GM10248 (cell line): ENCODE measurements at regions of chr4 and their contacts with region 1.

Region 1: GRCh38 chr4:25160714-25161595 is 706 bp upstream of the SEPSECS start:
- DNase-seq: no peak
- CTCF ChIP-seq: no peak

Region 2: GRCh38 chr4:24312261-24312913 is 848.6 kb before region 1 on chr4:
- CTCF ChIA-PET with region 1: no interaction called
- POLR2A ChIA-PET with region 1: interaction called, 10 read pairs
- DNase-seq: no peak
- CTCF ChIP-seq: no peak

Region 3: DNA sequence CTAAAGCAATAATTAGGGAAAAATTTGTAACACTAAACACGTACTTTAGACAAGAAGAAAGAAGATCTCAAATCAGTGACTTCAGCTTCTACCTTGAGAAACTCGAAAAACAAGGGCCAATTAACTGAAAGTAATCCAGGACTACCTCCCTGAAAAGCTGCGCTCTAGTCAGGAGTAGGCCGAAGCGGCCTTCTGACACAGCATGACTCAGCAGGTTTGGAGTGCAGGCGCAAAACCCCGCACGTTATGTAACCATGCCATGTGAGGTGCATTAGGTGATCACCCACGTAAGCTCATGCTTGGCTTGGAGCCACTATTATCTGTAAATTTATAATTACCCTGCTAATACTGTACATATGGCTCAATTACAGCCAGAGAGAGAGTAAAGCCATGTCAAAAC is 195.3 kb before region 1 on chr4:
- CTCF ChIA-PET with region 1: no interaction called
- POLR2A ChIA-PET with region 1: no interaction called
- DNase-seq: no peak
- CTCF ChIP-seq: no peak

Region 4: DNA sequence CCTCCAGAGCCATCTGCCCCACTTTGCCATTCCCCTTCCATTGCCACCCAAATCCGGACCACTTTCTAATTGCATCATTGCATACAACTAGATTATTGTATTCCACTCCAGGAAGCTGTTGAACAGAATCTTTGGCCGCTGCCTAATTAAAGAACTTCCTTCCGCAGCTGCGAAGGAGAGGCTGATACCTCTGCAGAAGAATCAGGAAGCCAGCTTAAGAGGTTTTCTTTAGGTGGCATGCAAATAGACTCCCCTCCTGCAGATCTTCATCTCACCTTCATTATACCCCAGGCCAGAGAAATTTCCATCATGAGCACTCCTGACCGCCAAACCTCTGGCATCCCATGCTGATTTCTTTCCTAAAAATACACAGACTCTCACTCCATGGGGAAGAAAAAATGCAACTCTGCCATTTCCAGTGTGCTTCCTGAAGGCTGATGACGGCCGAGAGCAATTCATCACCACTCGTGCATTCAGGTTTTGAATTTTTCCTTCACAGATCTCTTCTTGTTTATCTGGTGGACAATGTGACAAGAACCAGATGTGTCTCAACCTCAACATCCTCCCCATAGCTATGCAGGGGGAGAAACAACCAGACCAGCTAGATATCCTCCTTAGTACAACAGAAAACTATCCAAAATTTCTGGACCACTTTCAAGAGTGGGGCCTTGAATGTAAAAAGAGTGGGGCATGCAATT is 161.4 kb before region 1 on chr4:
- CTCF ChIA-PET with region 1: no interaction called
- POLR2A ChIA-PET with region 1: no interaction called
- DNase-seq: no peak
- CTCF ChIP-seq: no peak

Region 5: DNA sequence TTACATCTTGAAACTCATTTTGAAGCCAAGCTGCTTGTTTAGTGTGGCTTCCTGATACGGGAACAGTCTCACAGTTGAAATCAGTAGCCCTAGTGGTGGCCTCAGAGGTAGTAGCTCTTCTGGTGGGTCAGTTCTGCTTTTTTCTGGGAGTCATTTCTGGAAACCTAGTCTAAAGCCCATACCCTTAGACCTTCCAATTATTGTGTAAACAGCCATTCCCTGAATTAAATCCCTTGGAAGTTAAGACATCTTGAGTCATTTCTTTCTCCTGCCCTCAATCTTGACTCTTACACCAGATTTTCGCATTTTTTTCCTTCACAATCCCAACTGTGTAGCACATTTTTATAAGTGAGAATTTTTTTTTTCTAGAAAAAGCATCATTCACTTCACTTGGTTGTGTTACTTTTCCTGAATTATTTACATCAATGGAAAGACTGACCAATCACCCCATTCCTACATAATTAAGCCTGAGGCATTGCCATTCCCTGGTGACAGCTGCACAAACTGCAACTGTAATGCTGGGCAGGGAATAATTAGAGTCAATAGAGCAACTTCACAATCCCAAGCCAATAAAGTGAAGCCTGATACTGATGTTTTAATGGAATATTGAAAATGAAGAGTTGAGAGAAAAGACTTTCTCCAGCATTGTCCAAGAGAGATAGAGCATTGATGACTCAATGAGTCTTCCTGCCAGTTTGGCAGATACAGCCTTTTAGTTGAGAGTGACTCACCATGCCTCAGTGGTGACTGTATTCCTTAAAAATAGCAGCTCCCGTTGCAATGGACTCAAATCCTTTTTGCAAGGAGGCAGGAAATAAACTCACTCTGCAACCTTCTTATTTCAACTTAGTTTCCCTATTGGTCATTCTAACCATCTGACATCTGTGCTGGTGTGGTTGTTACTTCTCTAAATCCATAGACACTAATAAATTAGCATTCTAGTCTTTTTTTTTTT is 12.3 kb after region 1 on chr4:
- CTCF ChIA-PET with region 1: interaction called, 13 read pairs
- POLR2A ChIA-PET with region 1: no interaction called
- DNase-seq: peak; percentile 24
- CTCF ChIP-seq: no peak

Region 6: DNA sequence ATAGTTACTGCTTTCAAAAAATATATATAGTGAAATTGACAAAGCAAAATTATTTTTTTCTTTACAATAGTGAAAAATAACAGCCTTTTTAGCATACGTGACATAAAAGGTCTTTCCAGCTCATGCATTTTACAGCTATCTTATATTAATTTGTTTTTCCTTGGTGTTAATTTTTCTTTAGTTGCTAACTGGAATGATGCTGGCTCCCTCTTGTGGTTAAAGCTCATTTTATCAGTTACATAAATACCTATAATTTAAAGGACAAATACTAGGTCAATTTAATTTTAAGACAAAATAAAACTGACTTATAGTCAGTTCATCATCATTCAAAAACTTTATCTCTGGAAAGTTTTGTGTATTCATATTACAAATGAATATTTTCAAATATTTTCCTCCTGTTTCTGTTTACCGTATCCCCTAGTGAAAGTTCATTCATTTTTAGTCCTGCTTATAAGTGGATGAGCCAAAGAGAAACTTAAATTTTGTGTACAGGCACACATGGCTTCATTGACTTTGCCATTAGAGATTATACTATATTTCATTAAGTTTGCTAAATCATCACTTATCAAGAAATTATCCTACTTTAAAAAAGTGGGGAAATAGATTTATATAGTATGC is 206.2 kb after region 1 on chr4:
- CTCF ChIA-PET with region 1: interaction called, 10 read pairs
- POLR2A ChIA-PET with region 1: no interaction called
- DNase-seq: peak; percentile 33
- CTCF ChIP-seq: peak; percentile 59

Region 7: GRCh38 chr4:25377572-25378436 is 216.8 kb after region 1 on chr4:
- CTCF ChIA-PET with region 1: no interaction called
- POLR2A ChIA-PET with region 1: no interaction called
- DNase-seq: peak; percentile 13
- CTCF ChIP-seq: no peak